ENCODE measurements at regions of chr4 and their contacts with region 1.

Region 1: GRCh38 chr4:109424093-109424841 is 9.3 kb upstream of the SEC24B start:
- DNase-seq: no peak
- ATAC-seq: no peak
- H3K4me3 ChIP-seq: no peak overlapping the region
- H3K27ac ChIP-seq: no peak overlapping the region
- H3K4me1 ChIP-seq: peaks cover 0 to 5% (median 0%) of the 10 kb centered on the region in 12 donors
- H3K27me3 ChIP-seq: no peaks in the 10 kb centered on the region
- CTCF ChIP-seq: no peak
- POLR2A ChIP-seq: no peak

Region 2: GRCh38 chr4:109294006-109294405 is 130.3 kb before region 1 on chr4:
- intact Hi-C with region 1: no loop called
- DNase-seq: peak in 1 of 5 donors; percentile 24
- ATAC-seq: no peak
- H3K4me3 ChIP-seq: no peak overlapping the region
- H3K27ac ChIP-seq: no peak overlapping the region
- H3K4me1 ChIP-seq: no peaks in the 10 kb centered on the region
- H3K27me3 ChIP-seq: peaks cover 0 to 7% (median 0%) of the 10 kb centered on the region in 9 donors
- CTCF ChIP-seq: peak in 8 of 12 donors; percentile 9 to 29 (median 24)
- POLR2A ChIP-seq: no peak

Region 3: DNA sequence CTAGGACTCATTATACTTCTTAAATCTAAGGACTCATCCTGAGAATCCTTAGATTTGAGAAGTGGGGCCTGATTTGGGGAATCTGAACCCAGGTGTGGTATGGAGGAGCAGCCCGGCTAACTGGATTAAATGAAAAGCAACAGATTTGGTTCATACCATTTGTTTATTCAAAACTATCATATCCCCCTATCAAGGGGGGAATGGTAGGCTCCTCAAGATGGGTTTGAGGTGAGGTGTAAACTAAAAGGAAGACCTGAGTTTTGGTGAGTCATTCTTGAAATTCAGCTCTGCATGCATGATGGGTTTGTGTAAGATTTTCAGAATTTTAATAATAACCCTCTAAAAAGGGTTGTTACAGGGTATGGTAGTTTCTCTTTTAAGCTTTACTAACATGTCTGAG is 225.6 kb after region 1 on chr4:
- intact Hi-C with region 1: loop called in 5 of 10 experiments (anchors 5 to 10 kb)
- DNase-seq: no peak
- ATAC-seq: no peak
- H3K4me3 ChIP-seq: no peak overlapping the region
- H3K27ac ChIP-seq: peak overlapping the region in 1 of 12 donors; percentile 70
- H3K4me1 ChIP-seq: peaks cover 0 to 9% (median 0%) of the 10 kb centered on the region in 12 donors
- H3K27me3 ChIP-seq: no peaks in the 10 kb centered on the region
- CTCF ChIP-seq: no peak
- POLR2A ChIP-seq: no peak

Region 4: DNA sequence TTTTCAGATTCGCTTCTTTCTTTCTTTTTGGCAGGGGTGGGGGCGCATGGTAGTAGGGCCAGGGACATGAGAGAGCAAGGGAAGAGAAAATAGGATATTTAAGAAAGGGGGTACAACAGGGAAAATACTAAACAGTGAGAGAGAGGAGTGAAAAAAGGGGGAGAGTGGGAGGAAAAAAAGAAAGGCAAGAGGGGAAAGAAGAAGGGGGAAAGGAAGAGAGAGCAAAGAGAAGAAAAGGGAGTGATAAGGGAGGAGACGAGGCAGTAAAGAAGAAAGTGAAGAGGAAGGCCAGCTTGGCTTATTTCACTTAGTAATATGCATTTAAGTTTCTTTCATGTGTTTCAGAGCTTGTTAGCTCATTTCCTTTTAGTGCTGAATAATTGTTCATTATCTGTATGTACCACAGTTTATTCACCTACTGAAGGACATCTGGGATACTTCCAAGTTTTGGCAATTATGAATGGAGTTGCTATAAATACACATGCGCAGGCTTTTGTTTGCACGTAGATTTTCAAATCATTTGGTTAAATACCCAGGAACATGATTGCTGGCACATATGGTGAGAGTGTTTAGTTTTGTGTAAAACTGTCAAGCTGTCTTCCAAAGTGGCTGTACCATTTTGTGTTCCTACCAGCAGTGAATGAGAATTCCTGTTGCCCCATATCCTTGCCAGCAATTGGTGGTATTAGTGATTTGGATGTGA is 241.7 kb after region 1 on chr4:
- intact Hi-C with region 1: loop called in 3 of 10 experiments (anchors 5 to 10 kb)
- DNase-seq: no peak
- ATAC-seq: no peak
- H3K4me3 ChIP-seq: no peak overlapping the region
- H3K27ac ChIP-seq: no peak overlapping the region
- H3K4me1 ChIP-seq: peaks cover 0 to 10% (median 0%) of the 10 kb centered on the region in 12 donors
- H3K27me3 ChIP-seq: no peaks in the 10 kb centered on the region
- CTCF ChIP-seq: no peak
- POLR2A ChIP-seq: no peak

Region 5: GRCh38 chr4:109803924-109804571 is 379.8 kb after region 1 on chr4:
- intact Hi-C with region 1: loop called in 2 of 10 experiments (anchors 1 to 5 kb)
- DNase-seq: no peak
- ATAC-seq: peak in 1 of 4 donors; percentile 61
- H3K4me3 ChIP-seq: no peak overlapping the region
- H3K27ac ChIP-seq: no peak overlapping the region
- H3K4me1 ChIP-seq: peaks cover 0 to 7% (median 0%) of the 10 kb centered on the region in 12 donors
- H3K27me3 ChIP-seq: no peaks in the 10 kb centered on the region
- CTCF ChIP-seq: peak in 8 of 12 donors; percentile 17 to 47 (median 36)
- POLR2A ChIP-seq: no peak

Region 6: GRCh38 chr4:109826719-109827118 is 402.5 kb after region 1 on chr4:
- intact Hi-C with region 1: loop called in 9 of 10 experiments (anchors 1 to 5 kb)
- DNase-seq: no peak
- ATAC-seq: no peak
- H3K4me3 ChIP-seq: no peak overlapping the region
- H3K27ac ChIP-seq: no peak overlapping the region
- H3K4me1 ChIP-seq: no peaks in the 10 kb centered on the region
- H3K27me3 ChIP-seq: no peaks in the 10 kb centered on the region
- CTCF ChIP-seq: peak; percentile 44 to 66 (median 54)
- POLR2A ChIP-seq: no peak

Measured in heart left ventricle (tissue), 16 donors.